Activated CD4-positive, alpha-beta T cell treated with anti-CD3 and anti-CD28 coated beads, Interleukin-2, amount 10 ng/mL, durations not matched to agents 24 days and 14 days (primary cell): ENCODE measurements at regions of chr6 and their contacts with region 1.

Region 1: GRCh38 chr6:13328076-13328874 is at the start of gene TBC1D7:
- DNase-seq: peak; percentile 98
- H3K4me3 Mint-ChIP-seq: peak within 1 kb of the TSS; percentile 85
- H3K27ac Mint-ChIP-seq: peak within 1 kb of the TSS; percentile 96
- H3K4me1 Mint-ChIP-seq: peaks cover 34% of the 10 kb centered on the region
- H3K27me3 Mint-ChIP-seq: no peaks in the 10 kb centered on the region
- total RNA-seq, gene TBC1D7: 25.1 and 26.8 TPM in 2 replicates

Region 2: DNA sequence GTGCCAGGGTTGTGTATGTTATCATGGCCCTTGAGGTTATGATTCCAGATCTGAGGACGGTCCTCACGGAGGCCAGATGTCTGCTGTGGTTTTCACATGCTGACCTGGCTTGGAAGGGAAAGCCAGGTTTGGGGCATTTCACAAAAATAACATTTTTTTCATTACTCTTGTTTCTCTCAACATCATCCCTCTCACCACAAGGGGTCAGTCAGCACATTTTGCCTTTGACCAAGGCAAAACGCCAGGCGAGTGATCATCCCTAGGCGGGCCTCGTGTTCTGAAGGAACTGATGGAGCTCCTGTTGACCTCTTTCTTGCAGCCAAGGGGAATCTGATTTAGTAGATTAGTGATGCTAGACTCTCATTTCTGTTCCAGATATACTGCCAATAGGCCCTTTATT is 133.4 kb before region 1 on chr6:
- intact Hi-C with region 1: loop called (anchors 2 kb)
- DNase-seq: peak; percentile 65
- H3K4me3 Mint-ChIP-seq: no peak overlapping the region
- H3K27ac Mint-ChIP-seq: no peak overlapping the region
- H3K4me1 Mint-ChIP-seq: no peaks in the 10 kb centered on the region
- H3K27me3 Mint-ChIP-seq: peaks cover 20% of the 10 kb centered on the region

Region 3: GRCh38 chr6:13273931-13274706 is 54.2 kb before region 1 on chr6:
- intact Hi-C with region 1: loop called (anchors 2 kb)
- DNase-seq: peak; percentile 84
- H3K4me3 Mint-ChIP-seq: peak overlapping the region; percentile 63
- H3K27ac Mint-ChIP-seq: peak overlapping the region; percentile 75
- H3K4me1 Mint-ChIP-seq: peaks cover 22% of the 10 kb centered on the region
- H3K27me3 Mint-ChIP-seq: peaks cover 11% of the 10 kb centered on the region

Region 4: DNA sequence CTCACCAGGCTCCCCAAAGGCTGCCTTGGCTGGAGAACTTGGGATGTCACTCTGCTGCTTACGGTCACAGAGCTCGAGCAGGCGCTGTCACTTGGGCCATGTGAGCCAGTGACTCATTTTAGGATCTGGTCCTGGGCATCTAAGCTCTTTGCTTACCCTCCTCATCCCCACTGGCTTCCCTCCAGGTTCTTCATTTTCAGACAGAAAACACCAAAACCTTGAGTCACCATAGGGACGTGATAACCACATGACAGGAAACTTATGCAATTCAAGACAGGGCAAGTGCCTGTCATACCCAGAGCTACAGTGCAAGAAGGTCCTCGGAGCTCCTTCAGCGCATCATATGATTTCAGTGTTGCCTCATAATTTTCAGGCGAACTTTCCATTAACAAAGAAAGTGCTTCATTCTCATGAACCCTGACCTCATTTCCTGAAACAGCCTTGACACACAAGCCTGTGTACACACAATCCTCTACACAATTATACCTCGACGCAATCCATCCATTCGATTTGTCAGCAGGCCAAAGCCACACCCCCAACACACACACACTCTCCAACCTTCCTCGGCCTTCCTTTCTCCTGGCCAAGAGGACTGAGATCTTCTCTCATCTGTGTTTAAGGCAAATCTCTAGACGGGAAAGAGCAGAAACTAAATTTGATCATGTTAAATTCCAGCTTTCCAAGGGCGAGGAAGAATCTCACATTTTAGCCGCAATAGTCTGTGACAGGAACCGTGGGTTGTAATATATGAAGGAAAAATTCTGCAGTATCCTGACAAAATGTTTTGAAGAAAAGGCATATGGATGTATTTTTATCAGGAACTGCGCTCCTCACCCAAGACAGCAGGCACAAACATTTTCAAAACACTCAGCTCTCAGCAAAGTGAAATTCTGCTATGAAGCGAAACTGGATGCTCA is 25.3 kb before region 1 on chr6:
- intact Hi-C with region 1: loop called (anchors 1 kb)
- DNase-seq: peak; percentile 85
- H3K4me3 Mint-ChIP-seq: peak overlapping the region; percentile 49
- H3K27ac Mint-ChIP-seq: peak overlapping the region; percentile 79
- H3K4me1 Mint-ChIP-seq: peaks cover 24% of the 10 kb centered on the region
- H3K27me3 Mint-ChIP-seq: no peaks in the 10 kb centered on the region

Region 5: GRCh38 chr6:13614926-13615798 is 286.9 kb after region 1 on chr6 and contains the start of gene NOL7:
- intact Hi-C with region 1: loop called (anchors 1 kb)
- DNase-seq: peak; percentile 100
- H3K4me3 Mint-ChIP-seq: peak within 1 kb of the TSS; percentile 92
- H3K27ac Mint-ChIP-seq: peak within 1 kb of the TSS; percentile 96
- H3K4me1 Mint-ChIP-seq: peaks cover 33% of the 10 kb centered on the region
- H3K27me3 Mint-ChIP-seq: no peaks in the 10 kb centered on the region
- total RNA-seq, gene NOL7: 103 and 104 TPM in 2 replicates